ENCODE measurements at regions of chr14 and their contacts with region 1.

Region 1: GRCh38 chr14:105375635-105376057 is 22.7 kb upstream of the TEX22 start:
- DNase-seq: no peak
- ATAC-seq: no peak

Region 2: DNA sequence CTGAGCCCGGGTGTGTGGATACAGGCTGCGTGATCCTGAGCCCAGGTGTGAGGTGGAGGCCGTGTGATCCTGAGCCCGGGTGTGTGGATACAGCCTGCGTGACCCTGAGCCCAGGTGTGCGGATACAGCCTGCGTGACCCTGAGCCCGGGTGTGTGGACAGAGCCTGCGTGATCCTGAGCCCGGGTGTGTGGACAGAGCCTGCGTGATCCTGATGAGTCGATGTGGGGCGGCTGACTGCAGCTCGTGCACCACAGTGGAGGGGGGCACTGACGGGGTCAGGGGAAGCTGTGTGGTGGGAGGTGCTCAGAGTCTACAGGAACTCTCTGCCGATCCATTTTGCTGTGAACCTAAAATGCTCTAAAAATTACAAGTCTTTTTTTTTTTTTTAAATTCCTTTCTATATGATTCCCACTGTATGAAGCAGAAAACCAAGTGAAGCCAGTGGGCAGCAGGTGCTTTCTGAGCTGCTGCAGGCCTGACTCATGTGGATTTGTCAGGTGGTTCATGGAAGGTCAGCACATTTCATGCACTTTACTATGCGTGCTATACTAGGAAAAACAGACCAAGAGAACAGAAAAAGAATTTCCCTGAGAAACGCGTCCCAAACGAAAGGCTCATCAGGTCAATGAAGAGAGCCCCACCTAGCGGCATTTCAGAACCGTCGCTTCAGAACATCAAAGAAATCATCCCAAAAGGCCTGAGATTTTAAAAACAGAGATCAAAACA is 94.1 kb before region 1 on chr14:
- intact Hi-C with region 1: no loop called
- DNase-seq: peak; percentile 37
- ATAC-seq: no peak

Region 3: GRCh38 chr14:105448706-105449111 is 73.1 kb after region 1 on chr14:
- intact Hi-C with region 1: loop called (anchors 5 kb)
- DNase-seq: peak; percentile 88
- ATAC-seq: peak; percentile 88

Region 4: GRCh38 chr14:105527661-105528581 is 152.3 kb after region 1 on chr14:
- intact Hi-C with region 1: loop called (anchors 1 kb)
- DNase-seq: peak; percentile 89
- ATAC-seq: peak; percentile 81

Measured in Right ventricle myocardium inferior (tissue), 1 donor.